Aorta (tissue), 5 donors: ENCODE measurements at regions of chr1 and their contacts with region 1.

Region 1: GRCh38 chr1:42958488-42959319 is at the start of gene SLC2A1:
- DNase-seq: peak; percentile 94 to 97
- ATAC-seq: peak; percentile 93
- H3K4me3 ChIP-seq: peak within 1 kb of the TSS; percentile 77 to 92
- H3K27ac ChIP-seq: peak within 1 kb of the TSS; percentile 78
- H3K4me1 ChIP-seq: no peaks in the 10 kb centered on the region
- H3K27me3 ChIP-seq: no peaks in the 10 kb centered on the region
- total RNA-seq, gene SLC2A1: 87.7 to 124 TPM

Region 2: DNA sequence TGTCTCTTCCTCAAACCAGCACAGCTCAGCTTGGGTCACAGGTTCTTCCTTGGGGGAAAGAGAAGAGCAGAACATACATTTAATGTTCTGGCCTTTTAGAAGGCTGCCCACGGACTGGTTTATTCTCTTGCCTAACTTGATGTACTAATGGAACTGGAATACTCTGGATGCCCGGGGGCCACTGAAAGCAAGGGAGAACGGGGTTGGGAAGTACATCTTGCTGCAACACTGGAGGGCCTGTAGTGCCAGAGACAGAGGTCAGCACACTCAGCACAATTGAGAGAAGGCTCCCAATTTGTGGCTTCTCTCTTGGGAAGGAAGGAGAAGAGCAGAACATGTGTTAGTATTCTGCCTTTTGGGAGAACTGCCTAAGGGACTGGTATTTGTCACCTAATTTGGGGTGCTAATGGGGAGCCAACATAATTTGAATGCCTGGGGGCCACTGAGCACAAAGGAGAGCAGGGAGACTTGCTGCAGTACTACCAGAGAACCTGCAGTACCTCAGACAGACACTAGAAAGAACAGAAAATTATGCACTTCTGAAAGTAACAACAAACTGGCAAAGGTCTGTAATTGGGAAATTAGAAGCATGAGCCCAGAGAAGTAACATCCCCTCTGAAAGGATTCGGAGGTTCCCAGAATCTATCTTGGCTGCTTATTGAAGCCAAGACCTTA is 98.2 kb before region 1 on chr1:
- intact Hi-C with region 1: no loop called
- DNase-seq: no peak
- ATAC-seq: no peak
- H3K4me3 ChIP-seq: no peak overlapping the region
- H3K27ac ChIP-seq: no peak overlapping the region
- H3K4me1 ChIP-seq: no peaks in the 10 kb centered on the region
- H3K27me3 ChIP-seq: no peaks in the 10 kb centered on the region

Region 3: GRCh38 chr1:42941640-42942330 is 16.9 kb before region 1 on chr1:
- intact Hi-C with region 1: loop called in 1 of 2 experiments (anchors 1 kb)
- DNase-seq: peak; percentile 93 to 94
- ATAC-seq: peak; percentile 82
- H3K4me3 ChIP-seq: no peak overlapping the region
- H3K27ac ChIP-seq: peak overlapping the region; percentile 91 to 95
- H3K4me1 ChIP-seq: peaks cover 4 to 9% of the 10 kb centered on the region in 2 donors
- H3K27me3 ChIP-seq: no peaks in the 10 kb centered on the region

Region 4: GRCh38 chr1:43143441-43143888 is 184.8 kb after region 1 on chr1:
- intact Hi-C with region 1: no loop called
- DNase-seq: no peak
- ATAC-seq: no peak
- H3K4me3 ChIP-seq: no peak overlapping the region
- H3K27ac ChIP-seq: no peak overlapping the region
- H3K4me1 ChIP-seq: no peaks in the 10 kb centered on the region
- H3K27me3 ChIP-seq: no peaks in the 10 kb centered on the region